MCF 10A (cell line): ENCODE measurements at regions of chr5 and their contacts with region 1.

Region 1: DNA sequence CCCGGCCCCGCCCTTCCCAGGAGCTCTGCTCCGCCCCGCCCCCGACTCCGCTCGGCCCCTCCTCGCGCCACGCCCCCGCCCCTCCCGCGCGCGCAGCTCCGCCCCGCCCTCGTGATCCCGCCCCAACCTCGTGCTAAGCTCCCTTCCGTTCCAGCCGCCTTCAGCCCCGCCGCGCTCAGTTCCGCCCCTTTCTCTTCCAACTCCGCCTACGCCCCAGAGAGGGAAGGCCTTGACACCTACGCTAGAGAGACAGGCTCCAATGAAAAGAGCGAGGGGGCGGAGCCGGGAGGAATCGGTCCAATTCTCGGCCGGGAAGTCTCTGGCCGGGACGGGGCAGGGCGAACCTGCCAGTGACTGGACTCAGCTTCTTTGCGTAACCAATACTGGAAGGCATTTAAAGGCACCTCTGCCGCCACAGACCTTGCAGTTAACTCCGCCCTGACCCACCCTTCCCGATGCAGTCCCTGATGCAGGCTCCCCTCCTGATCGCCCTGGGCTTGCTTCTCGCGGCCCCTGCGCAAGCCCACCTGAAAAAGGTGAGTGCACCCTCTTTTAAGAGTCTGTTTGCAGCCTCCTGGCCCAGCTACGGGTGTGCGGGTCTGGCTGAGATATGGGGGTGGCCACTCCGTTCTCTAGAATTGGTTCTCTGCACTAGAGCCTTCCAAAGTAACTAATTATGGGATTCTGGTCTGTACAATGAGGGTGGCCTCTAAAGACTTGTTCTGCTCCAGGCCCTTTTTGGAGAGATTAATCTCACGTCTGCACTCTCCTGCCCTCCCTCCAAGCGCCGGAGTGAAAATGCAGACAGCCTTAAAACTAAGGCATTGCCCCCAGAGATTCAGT is at the start of gene GM2A:
- DNase-seq: peak; percentile 100
- H3K4me3 Mint-ChIP-seq: peak within 1 kb of the TSS; percentile 79
- H3K27ac Mint-ChIP-seq: peak within 1 kb of the TSS; percentile 10
- H3K4me1 Mint-ChIP-seq: peaks cover 21% of the 10 kb centered on the region
- H3K27me3 Mint-ChIP-seq: no peaks in the 10 kb centered on the region
- CTCF ChIP-seq: no peak
- total RNA-seq, gene GM2A: 28.9 and 36.1 TPM in 2 replicates

Region 2: GRCh38 chr5:151080623-151081430 is 172.2 kb before region 1 on chr5 and contains the start of gene TNIP1:
- CTCF ChIA-PET with region 1: no interaction called
- POLR2A ChIA-PET with region 1: interaction called, 50 read pairs
- intact Hi-C with region 1: no loop called
- DNase-seq: peak; percentile 94
- H3K4me3 Mint-ChIP-seq: peak within 1 kb of the TSS; percentile 74
- H3K27ac Mint-ChIP-seq: peak within 1 kb of the TSS; percentile 59
- H3K4me1 Mint-ChIP-seq: peaks cover 78% of the 10 kb centered on the region
- H3K27me3 Mint-ChIP-seq: no peaks in the 10 kb centered on the region
- CTCF ChIP-seq: no peak
- total RNA-seq, gene TNIP1: 246 and 342 TPM in 2 replicates

Region 3: DNA sequence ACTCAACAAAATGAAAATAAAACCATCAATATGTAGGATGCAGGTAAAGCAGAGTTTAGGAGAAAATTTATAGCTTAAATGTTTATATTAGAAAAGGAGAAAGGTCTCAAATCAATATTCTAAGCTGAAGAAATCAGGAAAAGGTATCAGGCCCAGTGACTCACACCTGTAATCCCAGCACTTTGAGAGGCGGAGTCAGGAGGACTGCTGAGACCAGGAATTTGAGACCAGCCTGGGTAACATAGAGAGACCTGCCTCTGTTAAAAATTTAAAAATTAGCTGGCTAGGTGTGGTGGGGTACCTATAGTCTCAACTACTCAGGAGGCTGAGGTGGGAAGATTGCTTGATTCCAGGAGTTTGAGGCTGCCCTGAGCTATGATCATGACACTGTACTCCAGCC is 61.3 kb before region 1 on chr5:
- CTCF ChIA-PET with region 1: no interaction called
- POLR2A ChIA-PET with region 1: no interaction called
- intact Hi-C with region 1: no loop called
- DNase-seq: peak; percentile 48
- H3K4me3 Mint-ChIP-seq: no peak overlapping the region
- H3K27ac Mint-ChIP-seq: peak overlapping the region; percentile 3
- H3K4me1 Mint-ChIP-seq: peaks cover 21% of the 10 kb centered on the region
- H3K27me3 Mint-ChIP-seq: no peaks in the 10 kb centered on the region
- CTCF ChIP-seq: no peak

Region 4: DNA sequence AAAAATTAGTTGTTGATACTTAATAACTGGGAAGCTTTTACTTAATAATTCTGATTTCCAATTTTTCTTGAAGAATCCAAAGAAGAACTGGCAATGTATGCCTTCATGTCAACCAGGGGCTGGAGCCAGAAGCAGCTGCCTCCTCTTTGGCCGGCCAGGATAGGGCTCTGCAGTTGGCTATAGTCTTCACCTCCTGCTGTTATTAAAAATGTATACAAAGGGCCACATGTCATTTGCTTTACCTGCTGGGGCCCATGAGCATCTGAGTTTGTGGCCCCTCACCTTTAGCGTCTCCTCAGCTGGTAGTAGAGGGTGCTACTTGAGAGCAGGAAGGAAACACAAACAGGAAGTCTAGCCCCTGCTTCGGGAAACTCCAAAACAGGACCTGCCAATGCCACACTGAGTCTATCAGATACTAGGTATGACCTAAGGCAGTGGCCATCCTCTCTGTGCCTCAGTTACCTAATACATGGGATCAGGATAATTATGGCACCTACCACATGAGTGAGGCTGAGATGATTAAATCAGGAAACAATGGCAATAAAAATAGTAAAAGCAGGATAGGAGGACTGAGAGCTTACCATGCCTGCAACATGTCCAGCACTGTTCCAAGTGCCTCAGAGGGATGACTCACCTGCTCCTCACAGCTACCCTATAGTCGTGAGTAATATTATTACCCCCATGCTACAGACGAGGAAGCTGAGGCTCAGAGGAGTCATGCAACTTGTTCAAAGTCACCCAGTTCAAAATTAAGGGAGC is 50.4 kb before region 1 on chr5:
- CTCF ChIA-PET with region 1: no interaction called
- POLR2A ChIA-PET with region 1: interaction called, 14 read pairs
- intact Hi-C with region 1: no loop called
- DNase-seq: peak; percentile 99
- H3K4me3 Mint-ChIP-seq: no peak overlapping the region
- H3K27ac Mint-ChIP-seq: no peak overlapping the region
- H3K4me1 Mint-ChIP-seq: peaks cover 11% of the 10 kb centered on the region
- H3K27me3 Mint-ChIP-seq: no peaks in the 10 kb centered on the region
- CTCF ChIP-seq: no peak

Region 5: GRCh38 chr5:151239237-151239861 is 13.6 kb before region 1 on chr5:
- CTCF ChIA-PET with region 1: interaction called, 29 read pairs
- POLR2A ChIA-PET with region 1: interaction called, 11 read pairs
- intact Hi-C with region 1: no loop called
- DNase-seq: peak; percentile 83
- H3K4me3 Mint-ChIP-seq: no peak overlapping the region
- H3K27ac Mint-ChIP-seq: peak overlapping the region; percentile 20
- H3K4me1 Mint-ChIP-seq: peaks cover 4% of the 10 kb centered on the region
- H3K27me3 Mint-ChIP-seq: no peaks in the 10 kb centered on the region
- CTCF ChIP-seq: peak; percentile 98

Region 6: GRCh38 chr5:151288180-151288579 is 35.2 kb after region 1 on chr5:
- CTCF ChIA-PET with region 1: no interaction called
- POLR2A ChIA-PET with region 1: interaction called, 13 read pairs
- intact Hi-C with region 1: no loop called
- DNase-seq: peak; percentile 69
- H3K4me3 Mint-ChIP-seq: no peak overlapping the region
- H3K27ac Mint-ChIP-seq: no peak overlapping the region
- H3K4me1 Mint-ChIP-seq: peaks cover 6% of the 10 kb centered on the region
- H3K27me3 Mint-ChIP-seq: no peaks in the 10 kb centered on the region
- CTCF ChIP-seq: peak; percentile 5

Region 7: GRCh38 chr5:151447174-151448037 is 194.4 kb after region 1 on chr5 and contains the start of gene SLC36A1:
- CTCF ChIA-PET with region 1: interaction called, 3 read pairs
- POLR2A ChIA-PET with region 1: interaction called, 11 read pairs
- intact Hi-C with region 1: no loop called
- DNase-seq: peak; percentile 97
- H3K4me3 Mint-ChIP-seq: peak within 1 kb of the TSS; percentile 77
- H3K27ac Mint-ChIP-seq: peak within 1 kb of the TSS; percentile 66
- H3K4me1 Mint-ChIP-seq: peaks cover 19% of the 10 kb centered on the region
- H3K27me3 Mint-ChIP-seq: peaks cover 28% of the 10 kb centered on the region
- CTCF ChIP-seq: peak; percentile 97
- total RNA-seq, gene SLC36A1: 10.4 and 16.2 TPM in 2 replicates

Region 8: GRCh38 chr5:151740336-151740942 is 487.5 kb after region 1 on chr5:
- CTCF ChIA-PET with region 1: interaction called, 3 read pairs
- POLR2A ChIA-PET with region 1: no interaction called
- intact Hi-C with region 1: loop called (anchors 10 kb)
- DNase-seq: peak; percentile 80
- H3K4me3 Mint-ChIP-seq: peak overlapping the region; percentile 45
- H3K27ac Mint-ChIP-seq: peak overlapping the region; percentile 86
- H3K4me1 Mint-ChIP-seq: peaks cover 55% of the 10 kb centered on the region
- H3K27me3 Mint-ChIP-seq: no peaks in the 10 kb centered on the region
- CTCF ChIP-seq: peak; percentile 93